ENCODE measurements at regions of chr3 and their contacts with region 1.

Region 1: DNA sequence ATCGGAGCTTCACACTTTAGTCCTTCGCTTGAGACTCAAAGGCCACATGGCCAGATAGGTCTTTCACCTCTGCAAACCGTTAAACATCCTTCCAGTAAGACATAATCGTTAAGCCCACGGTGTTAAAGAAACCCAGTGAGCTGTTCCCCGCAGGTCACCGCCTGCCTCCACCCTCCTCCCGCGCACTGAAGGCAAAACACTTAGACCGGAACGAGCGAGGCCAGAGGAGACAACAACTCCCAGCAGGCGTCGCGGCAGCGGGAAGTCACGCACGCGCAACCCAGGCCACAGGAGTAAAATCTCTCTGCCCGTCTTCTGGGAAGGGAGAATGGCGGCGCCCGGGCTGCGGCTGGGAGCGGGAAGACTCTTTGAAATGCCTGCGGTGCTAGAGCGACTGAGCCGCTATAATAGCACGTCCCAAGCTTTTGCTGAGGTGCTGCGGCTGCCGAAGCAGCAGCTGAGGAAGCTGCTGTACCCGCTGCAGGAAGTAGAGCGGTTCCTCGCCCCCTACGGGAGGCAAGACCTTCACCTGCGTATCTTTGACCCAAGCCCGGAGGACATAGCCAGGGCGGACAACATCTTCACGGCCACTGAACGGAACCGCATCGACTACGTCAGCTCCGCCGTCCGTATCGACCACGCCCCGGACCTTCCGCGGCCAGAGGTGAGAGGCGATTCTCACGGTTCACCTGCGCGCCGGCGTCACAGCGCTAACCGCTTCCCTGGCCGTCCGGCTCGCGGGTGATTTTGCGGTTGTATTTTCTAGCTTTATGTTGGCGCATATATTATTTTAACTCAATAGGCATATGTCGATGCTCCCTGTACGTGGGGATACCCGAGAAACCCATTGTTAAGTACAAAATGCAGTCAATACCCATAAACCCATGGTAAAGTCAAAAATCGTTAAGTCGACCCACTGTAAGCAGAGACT is at the start of gene GTPBP8:
- DNase-seq: peak; percentile 92
- ATAC-seq: peak; percentile 84
- H3K4me3 ChIP-seq: peak within 1 kb of the TSS; percentile 63 to 89 (median 76)
- H3K4me3 Mint-ChIP-seq: peak within 1 kb of the TSS; percentile 95
- H3K27ac ChIP-seq: peak within 1 kb of the TSS; percentile 82 to 98
- H3K27ac Mint-ChIP-seq: peak within 1 kb of the TSS; percentile 98
- H3K4me1 ChIP-seq: peaks cover 11 to 12% of the 10 kb centered on the region in 2 donors
- H3K4me1 Mint-ChIP-seq: peaks cover 30% of the 10 kb centered on the region
- H3K27me3 ChIP-seq: no peaks in the 10 kb centered on the region
- H3K27me3 Mint-ChIP-seq: no peaks in the 10 kb centered on the region
- CTCF ChIP-seq: no peak
- total RNA-seq, gene GTPBP8: 23.4 and 23.5 TPM in 2 replicates

Region 2: GRCh38 chr3:113005611-113006010 is 14.7 kb after region 1 on chr3:
- CTCF ChIA-PET with region 1: interaction called, 6 read pairs
- POLR2A ChIA-PET with region 1: interaction called, 3 read pairs
- intact Hi-C with region 1: loop called (anchors 2 kb)
- DNase-seq: no peak
- ATAC-seq: no peak
- H3K4me3 ChIP-seq: no peak overlapping the region
- H3K4me3 Mint-ChIP-seq: no peak overlapping the region
- H3K27ac ChIP-seq: no peak overlapping the region
- H3K27ac Mint-ChIP-seq: no peak overlapping the region
- H3K4me1 ChIP-seq: no peaks in the 10 kb centered on the region
- H3K4me1 Mint-ChIP-seq: peaks cover 2% of the 10 kb centered on the region
- H3K27me3 ChIP-seq: no peaks in the 10 kb centered on the region
- H3K27me3 Mint-ChIP-seq: no peaks in the 10 kb centered on the region
- CTCF ChIP-seq: no peak

Measured in B cell (primary cell).